Activated B cell treated with CpG ODN at 0.5 μM for 24 hours (primary cell): ENCODE measurements at regions of chr2 and their contacts with region 1.

Region 1: GRCh38 chr2:201071479-201072200 is at the starts of genes HYCC2 and NDUFB3:
- DNase-seq: peak; percentile 77
- ATAC-seq: peak; percentile 96
- H3K4me3 Mint-ChIP-seq: peak within 1 kb of the TSS; percentile 98
- H3K27ac Mint-ChIP-seq: peak within 1 kb of the TSS; percentile 96
- H3K4me1 Mint-ChIP-seq: peaks cover 50% of the 10 kb centered on the region
- H3K27me3 Mint-ChIP-seq: no peaks in the 10 kb centered on the region
- CTCF ChIP-seq: no peak
- total RNA-seq, gene HYCC2: 32.0 and 39.6 TPM in 2 replicates
- total RNA-seq, gene NDUFB3: 85.4 and 94.2 TPM in 2 replicates

Region 2: GRCh38 chr2:200578778-200579177 is 492.9 kb before region 1 on chr2:
- CTCF ChIA-PET with region 1: no interaction called
- POLR2A ChIA-PET with region 1: no interaction called
- intact Hi-C with region 1: loop called (anchors 2 kb)
- DNase-seq: no peak
- ATAC-seq: peak; percentile 42
- H3K4me3 Mint-ChIP-seq: no peak overlapping the region
- H3K27ac Mint-ChIP-seq: no peak overlapping the region
- H3K4me1 Mint-ChIP-seq: no peaks in the 10 kb centered on the region
- H3K27me3 Mint-ChIP-seq: peaks cover 2% of the 10 kb centered on the region
- CTCF ChIP-seq: no peak

Region 3: GRCh38 chr2:200864176-200864976 is 207.3 kb before region 1 on chr2 and contains the start of gene CLK1:
- CTCF ChIA-PET with region 1: no interaction called
- POLR2A ChIA-PET with region 1: interaction called, 9 read pairs
- intact Hi-C with region 1: loop called (anchors 1 kb)
- DNase-seq: peak; percentile 90
- ATAC-seq: peak; percentile 82
- H3K4me3 Mint-ChIP-seq: peak within 1 kb of the TSS; percentile 100
- H3K27ac Mint-ChIP-seq: peak within 1 kb of the TSS; percentile 100
- H3K4me1 Mint-ChIP-seq: peaks cover 41% of the 10 kb centered on the region
- H3K27me3 Mint-ChIP-seq: no peaks in the 10 kb centered on the region
- CTCF ChIP-seq: no peak
- total RNA-seq, gene CLK1: 173 and 203 TPM in 2 replicates

Region 4: DNA sequence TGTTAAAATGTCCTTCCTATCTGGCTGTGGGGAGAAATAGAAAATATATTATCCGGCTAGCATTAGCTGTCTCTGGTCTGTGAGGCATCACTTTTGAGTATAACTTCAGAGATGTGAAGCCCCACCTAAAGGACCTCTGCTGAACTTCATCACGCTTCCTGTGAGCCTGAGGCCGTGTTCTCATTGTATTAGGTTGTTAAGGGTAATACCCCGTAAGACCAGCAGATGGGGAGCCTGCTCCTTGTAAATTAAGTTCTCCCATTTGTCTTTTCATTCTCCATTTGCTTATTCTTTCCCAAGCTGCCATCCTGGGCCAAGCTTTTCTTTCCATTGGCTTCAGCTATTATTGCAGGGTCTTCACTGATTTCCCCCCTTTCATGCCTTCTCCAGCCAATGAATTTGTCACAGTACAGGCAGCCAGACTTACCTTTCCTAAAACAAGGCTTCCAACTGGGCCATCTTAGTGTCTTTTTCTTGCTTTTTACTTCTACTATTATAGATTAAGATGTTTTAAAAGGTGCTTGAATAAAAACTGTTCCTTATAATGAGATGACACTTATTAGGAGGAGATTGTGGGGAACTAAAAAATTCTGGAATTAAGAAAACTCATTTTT is 170.1 kb before region 1 on chr2:
- CTCF ChIA-PET with region 1: interaction called, 29 read pairs
- POLR2A ChIA-PET with region 1: no interaction called
- intact Hi-C with region 1: loop called (anchors 1 kb)
- DNase-seq: no peak
- ATAC-seq: peak; percentile 100
- H3K4me3 Mint-ChIP-seq: no peak overlapping the region
- H3K27ac Mint-ChIP-seq: peak overlapping the region; percentile 38
- H3K4me1 Mint-ChIP-seq: peaks cover 4% of the 10 kb centered on the region
- H3K27me3 Mint-ChIP-seq: no peaks in the 10 kb centered on the region
- CTCF ChIP-seq: peak; percentile 30

Region 5: DNA sequence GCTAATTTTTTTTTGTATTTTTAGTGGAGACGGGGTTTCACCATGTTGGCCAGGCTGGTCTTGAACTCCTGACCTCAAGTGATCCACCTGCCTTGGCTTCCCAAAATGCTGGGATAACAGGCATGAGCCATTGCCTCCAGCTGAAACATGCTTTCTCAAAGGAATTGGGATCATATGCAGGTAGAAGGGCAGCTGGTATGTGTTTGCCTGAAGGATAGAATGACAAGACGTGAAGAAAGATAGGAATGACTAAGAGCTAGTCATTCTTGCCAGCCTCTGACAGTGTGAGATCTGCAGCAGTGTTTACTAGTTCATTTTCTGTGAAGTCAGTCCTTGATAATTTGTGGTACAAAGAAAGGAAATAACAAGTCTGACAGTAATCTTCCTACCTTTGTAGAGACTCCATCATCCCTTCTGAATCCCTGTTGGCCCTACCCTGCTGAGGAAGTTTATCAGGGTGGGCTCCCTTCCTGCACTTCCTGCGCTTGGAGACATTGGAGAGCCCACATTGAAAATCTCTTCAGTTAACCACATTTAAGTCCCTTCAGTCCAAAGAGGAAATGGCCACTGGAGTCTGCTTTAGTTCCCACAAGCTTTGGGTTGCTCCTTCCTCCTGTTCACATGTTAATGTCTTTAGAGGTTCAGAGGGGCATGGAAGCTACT is 59.0 kb after region 1 on chr2:
- CTCF ChIA-PET with region 1: interaction called, 3 read pairs
- POLR2A ChIA-PET with region 1: no interaction called
- intact Hi-C with region 1: loop called (anchors 2 kb)
- DNase-seq: no peak
- ATAC-seq: no peak
- H3K4me3 Mint-ChIP-seq: peak overlapping the region; percentile 87
- H3K27ac Mint-ChIP-seq: peak overlapping the region; percentile 92
- H3K4me1 Mint-ChIP-seq: peaks cover 82% of the 10 kb centered on the region
- H3K27me3 Mint-ChIP-seq: no peaks in the 10 kb centered on the region
- CTCF ChIP-seq: no peak

Region 6: GRCh38 chr2:201182650-201183364 is 111.2 kb after region 1 on chr2 and contains the start of gene CASP10:
- CTCF ChIA-PET with region 1: interaction called, 12 read pairs
- POLR2A ChIA-PET with region 1: no interaction called
- intact Hi-C with region 1: no loop called
- DNase-seq: no peak
- ATAC-seq: peak; percentile 77
- H3K4me3 Mint-ChIP-seq: peak within 1 kb of the TSS; percentile 92
- H3K27ac Mint-ChIP-seq: peak within 1 kb of the TSS; percentile 83
- H3K4me1 Mint-ChIP-seq: peaks cover 48% of the 10 kb centered on the region
- H3K27me3 Mint-ChIP-seq: no peaks in the 10 kb centered on the region
- CTCF ChIP-seq: no peak
- total RNA-seq, gene CASP10: 9.5 and 13.8 TPM in 2 replicates

Region 7: GRCh38 chr2:201194097-201194496 is 122.5 kb after region 1 on chr2:
- CTCF ChIA-PET with region 1: no interaction called
- POLR2A ChIA-PET with region 1: no interaction called
- intact Hi-C with region 1: no loop called
- DNase-seq: no peak
- ATAC-seq: peak; percentile 92
- H3K4me3 Mint-ChIP-seq: peak overlapping the region; percentile 60
- H3K27ac Mint-ChIP-seq: peak overlapping the region; percentile 75
- H3K4me1 Mint-ChIP-seq: peaks cover 70% of the 10 kb centered on the region
- H3K27me3 Mint-ChIP-seq: no peaks in the 10 kb centered on the region
- CTCF ChIP-seq: no peak

Region 8: DNA sequence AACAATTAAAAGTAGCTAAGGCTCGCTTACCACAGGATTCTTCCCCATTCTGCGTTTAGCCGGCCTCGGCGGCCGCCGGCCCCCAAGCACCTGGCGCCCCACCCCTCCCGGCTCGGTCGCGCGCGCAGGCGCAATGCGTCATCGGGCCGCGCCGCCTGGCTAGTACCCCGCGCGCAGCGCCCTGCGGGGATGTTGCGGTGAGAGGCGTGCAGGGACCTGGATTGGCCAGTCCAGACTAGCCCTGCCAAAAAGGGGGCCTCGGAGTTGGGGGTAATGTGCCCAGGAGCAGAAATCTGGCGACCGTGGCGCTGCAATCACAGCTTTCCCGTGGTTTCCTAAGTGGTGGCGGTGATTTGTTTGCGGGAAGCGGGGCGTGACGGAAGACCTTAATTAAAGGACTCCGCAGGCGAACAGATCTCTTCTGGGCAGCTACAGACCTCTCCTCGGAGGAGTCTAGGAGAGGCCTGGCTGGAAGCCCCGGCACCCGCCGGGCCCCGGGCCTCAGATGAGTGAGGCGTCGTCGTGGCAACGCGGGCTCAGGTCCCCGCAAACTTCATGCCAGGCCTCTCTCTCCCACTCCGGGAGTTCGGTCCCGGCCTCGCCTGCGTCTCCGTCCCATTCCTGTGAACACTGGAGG is 571.1 kb after region 1 on chr2:
- CTCF ChIA-PET with region 1: no interaction called
- POLR2A ChIA-PET with region 1: no interaction called
- intact Hi-C with region 1: loop called (anchors 5 kb)
- DNase-seq: peak; percentile 91
- ATAC-seq: peak; percentile 86
- H3K4me3 Mint-ChIP-seq: peak overlapping the region; percentile 95
- H3K27ac Mint-ChIP-seq: peak overlapping the region; percentile 91
- H3K4me1 Mint-ChIP-seq: peaks cover 9% of the 10 kb centered on the region
- H3K27me3 Mint-ChIP-seq: no peaks in the 10 kb centered on the region
- CTCF ChIP-seq: no peak